ENCODE measurements at regions of chrX and their contacts with region 1.

Region 1: GRCh38 chrX:110412971-110413721 is 54.5 kb downstream of the RTL9 start:
- DNase-seq: peak; percentile 74 to 88 (median 80)
- H3K4me3 ChIP-seq: no peak overlapping the region
- H3K27ac ChIP-seq: no peak overlapping the region
- H3K4me1 ChIP-seq: no peaks in the 10 kb centered on the region
- H3K27me3 ChIP-seq: peaks cover 5% of the 10 kb centered on the region
- CTCF ChIP-seq: peak; percentile 69

Region 2: GRCh38 chrX:110156167-110156754 is 256.9 kb before region 1 on chrX:
- intact Hi-C with region 1: loop called (anchors 5 kb)
- DNase-seq: no peak
- H3K4me3 ChIP-seq: no peak overlapping the region
- H3K27ac ChIP-seq: no peak overlapping the region
- H3K4me1 ChIP-seq: no peaks in the 10 kb centered on the region
- H3K27me3 ChIP-seq: no peaks in the 10 kb centered on the region
- CTCF ChIP-seq: peak; percentile 29

Region 3: GRCh38 chrX:110310000-110310790 is 103.0 kb before region 1 on chrX:
- intact Hi-C with region 1: no loop called
- DNase-seq: no peak
- H3K4me3 ChIP-seq: no peak overlapping the region
- H3K27ac ChIP-seq: no peak overlapping the region
- H3K4me1 ChIP-seq: no peaks in the 10 kb centered on the region
- H3K27me3 ChIP-seq: no peaks in the 10 kb centered on the region
- CTCF ChIP-seq: no peak

Region 4: DNA sequence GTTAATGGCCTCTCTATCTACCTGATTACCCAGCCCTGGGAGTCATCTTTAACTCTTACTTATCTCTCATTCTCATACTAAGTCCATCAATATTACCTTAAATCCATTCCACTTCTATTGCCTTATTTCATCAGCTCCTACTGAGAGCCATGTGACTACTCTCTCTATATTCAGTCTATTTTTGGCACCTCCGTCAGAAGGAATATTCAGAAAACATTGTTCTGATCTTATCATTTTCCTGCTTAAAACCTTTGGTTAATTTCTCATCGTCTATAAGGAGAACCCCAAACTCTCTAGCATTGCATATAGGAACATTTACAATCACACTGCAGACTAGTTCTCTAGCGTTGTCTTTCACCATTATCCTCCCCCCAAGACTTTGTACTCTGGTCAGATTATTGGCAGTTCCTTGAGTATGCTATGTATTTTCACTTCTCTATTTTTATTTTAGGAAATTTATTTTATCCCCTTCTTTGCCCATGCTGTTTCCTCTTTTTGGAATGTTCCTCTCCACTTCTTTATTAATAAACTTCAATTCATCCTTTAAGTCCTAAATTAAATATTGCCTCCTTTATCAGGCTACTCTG is 81.6 kb before region 1 on chrX:
- intact Hi-C with region 1: no loop called
- DNase-seq: no peak
- H3K4me3 ChIP-seq: no peak overlapping the region
- H3K27ac ChIP-seq: no peak overlapping the region
- H3K4me1 ChIP-seq: no peaks in the 10 kb centered on the region
- H3K27me3 ChIP-seq: no peaks in the 10 kb centered on the region
- CTCF ChIP-seq: no peak

Measured in kidney (tissue), 22 donors.